Gastrocnemius medialis (tissue), 4 donors: ENCODE measurements at regions of chr20 and their contacts with region 1.

Region 1: DNA sequence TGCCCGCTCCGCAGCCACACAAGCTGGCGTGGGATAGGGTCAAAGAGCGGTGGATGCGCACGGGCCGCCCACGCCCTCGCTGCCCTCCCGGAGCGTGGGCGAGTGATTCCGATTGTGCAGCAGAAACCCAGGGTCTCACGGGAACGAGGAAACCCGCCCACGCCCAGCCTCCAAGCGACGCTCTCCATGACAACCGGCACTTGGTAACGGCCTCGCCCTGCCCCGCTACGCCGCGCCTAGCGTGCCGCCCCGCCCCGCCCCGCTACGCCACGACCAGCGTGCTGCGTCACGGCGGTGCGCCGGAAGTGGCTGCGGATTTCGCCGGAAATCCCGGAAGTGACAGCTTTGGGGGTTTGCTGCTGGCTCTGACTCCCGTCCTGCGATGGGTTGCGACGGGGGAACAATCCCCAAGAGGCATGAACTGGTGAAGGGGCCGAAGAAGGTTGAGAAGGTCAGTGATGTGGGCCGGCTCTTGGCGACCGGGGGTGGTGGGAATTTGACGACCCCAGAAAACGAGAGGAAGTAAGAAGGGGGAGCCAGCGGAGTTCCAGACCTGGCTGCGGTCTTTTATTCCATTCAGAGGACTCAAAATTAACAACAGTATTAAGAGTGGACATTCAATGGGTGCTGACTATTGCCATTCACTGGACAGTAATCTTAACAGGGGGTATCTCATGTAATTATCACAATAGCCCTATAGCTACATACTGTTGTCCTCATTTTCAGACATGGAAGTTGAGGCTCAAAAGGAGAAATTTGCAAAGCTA is at the start of gene RTF2:
- DNase-seq: peak; percentile 78 to 84
- ATAC-seq: peak; percentile 95 to 97
- H3K4me3 ChIP-seq: peak within 1 kb of the TSS; percentile 73 to 93 (median 92)
- H3K27ac ChIP-seq: peak within 1 kb of the TSS; percentile 79 to 87 (median 86)
- H3K4me1 ChIP-seq: peaks cover 27% of the 10 kb centered on the region in 2 donors
- H3K27me3 ChIP-seq: no peaks in the 10 kb centered on the region
- CTCF ChIP-seq: peak in 1 of 5 experiments; percentile 7
- POLR2A ChIP-seq: peak; percentile 31 to 49
- total RNA-seq, gene RTF2: 69.1 to 88.8 (median 77.5) TPM

Region 2: GRCh38 chr20:56358596-56359211 is 109.8 kb before region 1 on chr20 and contains the start of gene FAM210B:
- in situ Hi-C with region 1: no loop called
- intact Hi-C with region 1: loop called (anchors 1 kb)
- DNase-seq: peak; percentile 76 to 87
- ATAC-seq: peak; percentile 88 to 93
- H3K4me3 ChIP-seq: peak within 1 kb of the TSS; percentile 62 to 93 (median 76)
- H3K27ac ChIP-seq: peak within 1 kb of the TSS; percentile 68 to 91 (median 81)
- H3K4me1 ChIP-seq: peaks cover 27 to 29% of the 10 kb centered on the region in 2 donors
- H3K27me3 ChIP-seq: no peaks in the 10 kb centered on the region
- CTCF ChIP-seq: no peak
- POLR2A ChIP-seq: peak; percentile 72 to 77
- total RNA-seq, gene FAM210B: 34.5 to 57.2 (median 41.4) TPM